T-cell (primary cell): ENCODE measurements at regions of chr11 and their contacts with region 1.

Region 1: DNA sequence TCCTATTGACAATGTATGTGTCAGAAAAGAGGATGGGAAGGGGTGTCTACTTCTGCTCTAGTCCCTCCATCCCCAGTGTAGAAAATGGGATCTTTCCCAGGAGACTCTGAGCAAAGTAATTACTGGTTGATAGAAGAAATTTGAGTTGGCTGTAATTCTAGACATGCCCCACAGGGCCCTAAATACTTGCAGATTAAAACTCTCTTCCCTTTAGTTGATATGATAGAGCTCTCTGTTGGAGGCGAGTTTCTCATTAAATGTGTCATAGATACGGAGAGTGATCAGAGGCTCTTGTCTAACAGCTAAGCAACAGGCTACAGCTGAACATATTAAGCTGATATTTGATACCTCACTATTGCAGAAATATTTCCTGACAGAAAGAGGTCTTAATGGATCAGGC is 32.9 kb downstream of the OR52E1 start:
- DNase-seq: no peak
- ATAC-seq: no peak
- H3K4me3 ChIP-seq: no peak overlapping the region
- H3K4me3 Mint-ChIP-seq: no peak overlapping the region
- H3K27ac ChIP-seq: no peak overlapping the region
- H3K27ac Mint-ChIP-seq: no peak overlapping the region
- H3K4me1 ChIP-seq: no peaks in the 10 kb centered on the region
- H3K4me1 Mint-ChIP-seq: no peaks in the 10 kb centered on the region
- H3K27me3 ChIP-seq: no peaks in the 10 kb centered on the region
- H3K27me3 Mint-ChIP-seq: peaks cover 0 to 12% of the 10 kb centered on the region in 2 donors

Region 2: DNA sequence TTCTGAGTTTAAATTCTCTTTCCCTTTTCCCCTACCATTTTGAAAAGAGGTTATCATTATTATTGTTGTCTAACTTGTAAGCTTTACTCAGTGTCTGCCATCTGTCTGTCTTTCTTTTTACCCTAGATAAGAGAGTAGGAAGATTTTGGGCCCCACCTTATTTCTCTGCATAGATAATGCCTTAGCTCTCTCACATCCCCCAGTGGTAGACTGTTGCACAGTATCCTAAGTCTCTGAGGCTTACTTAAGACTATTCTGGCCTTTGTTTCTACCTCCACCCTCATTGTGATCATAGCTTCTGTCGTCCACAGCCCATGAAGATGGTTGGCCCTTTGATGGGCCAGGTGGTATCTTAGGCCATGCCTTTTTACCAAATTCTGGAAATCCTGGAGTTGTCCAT is 111.2 kb before region 1 on chr11:
- CTCF ChIA-PET with region 1: no interaction called
- POLR2A ChIA-PET with region 1: no interaction called
- DNase-seq: no peak
- ATAC-seq: no peak
- H3K4me3 ChIP-seq: no peak overlapping the region
- H3K4me3 Mint-ChIP-seq: no peak overlapping the region
- H3K27ac ChIP-seq: no peak overlapping the region
- H3K27ac Mint-ChIP-seq: no peak overlapping the region
- H3K4me1 ChIP-seq: no peaks in the 10 kb centered on the region
- H3K4me1 Mint-ChIP-seq: no peaks in the 10 kb centered on the region
- H3K27me3 ChIP-seq: no peaks in the 10 kb centered on the region
- H3K27me3 Mint-ChIP-seq: peaks cover 0 to 4% of the 10 kb centered on the region in 2 donors

Region 3: GRCh38 chr11:5081405-5081804 is 20.8 kb before region 1 on chr11:
- CTCF ChIA-PET with region 1: no interaction called
- POLR2A ChIA-PET with region 1: no interaction called
- DNase-seq: no peak
- ATAC-seq: no peak
- H3K4me3 ChIP-seq: no peak overlapping the region
- H3K4me3 Mint-ChIP-seq: no peak overlapping the region
- H3K27ac ChIP-seq: no peak overlapping the region
- H3K27ac Mint-ChIP-seq: no peak overlapping the region
- H3K4me1 ChIP-seq: no peaks in the 10 kb centered on the region
- H3K4me1 Mint-ChIP-seq: no peaks in the 10 kb centered on the region
- H3K27me3 ChIP-seq: no peaks in the 10 kb centered on the region
- H3K27me3 Mint-ChIP-seq: peaks cover 0 to 4% of the 10 kb centered on the region in 2 donors

Region 4: DNA sequence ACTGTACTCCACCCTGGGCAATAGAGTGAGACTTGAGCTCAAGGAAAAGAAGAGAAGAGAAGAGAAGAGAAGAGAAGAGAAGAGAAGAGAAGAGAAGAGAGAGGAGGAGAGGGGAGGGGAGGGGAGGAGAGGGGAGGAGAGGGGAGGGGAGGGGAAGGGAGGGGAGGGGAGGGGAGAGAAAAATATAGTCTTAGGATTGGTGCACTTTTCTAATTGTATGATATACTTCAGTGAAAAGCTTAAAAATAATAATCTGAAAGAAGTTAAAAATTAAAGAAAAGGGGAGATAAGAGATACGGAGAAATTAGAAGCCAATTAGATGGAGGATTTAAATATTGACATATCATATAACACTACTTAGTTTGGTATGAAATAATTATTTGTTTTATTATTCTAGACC is 16.6 kb after region 1 on chr11:
- CTCF ChIA-PET with region 1: interaction called in 1 of 2 experiments, 17 read pairs
- POLR2A ChIA-PET with region 1: no interaction called
- DNase-seq: no peak
- ATAC-seq: no peak
- H3K4me3 ChIP-seq: no peak overlapping the region
- H3K4me3 Mint-ChIP-seq: no peak overlapping the region
- H3K27ac ChIP-seq: no peak overlapping the region
- H3K27ac Mint-ChIP-seq: no peak overlapping the region
- H3K4me1 ChIP-seq: no peaks in the 10 kb centered on the region
- H3K4me1 Mint-ChIP-seq: no peaks in the 10 kb centered on the region
- H3K27me3 ChIP-seq: peaks cover 0 to 2% of the 10 kb centered on the region in 2 experiments
- H3K27me3 Mint-ChIP-seq: peaks cover 2 to 31% of the 10 kb centered on the region in 2 donors

Region 5: DNA sequence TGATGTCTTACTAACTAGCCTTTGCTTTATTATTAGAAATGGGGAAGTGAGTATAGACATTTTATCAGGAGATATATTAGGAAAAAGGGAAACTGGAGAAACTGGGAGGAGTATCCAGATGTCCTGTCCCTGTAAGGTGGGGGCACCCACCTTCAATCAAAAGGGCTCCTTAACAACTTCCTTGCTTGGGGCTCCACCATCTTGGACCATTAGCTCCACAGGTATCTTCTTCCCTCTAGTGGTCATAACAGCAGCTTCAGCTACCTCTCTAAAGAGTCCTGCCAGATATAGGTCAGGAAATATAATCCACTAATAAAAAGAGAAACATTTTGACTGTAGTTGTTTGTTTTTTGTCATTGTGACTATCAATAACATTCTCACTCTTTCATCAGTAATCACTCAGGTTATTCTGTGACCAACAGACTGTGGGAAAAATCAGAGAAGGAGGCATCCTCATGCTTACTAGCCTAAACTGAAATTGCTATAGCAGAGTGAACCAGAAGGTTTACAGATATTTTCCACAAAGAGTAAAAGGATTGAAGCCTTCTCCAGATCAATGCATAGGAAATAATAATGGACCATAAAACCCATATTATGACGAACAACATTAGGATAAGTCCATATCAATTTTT is 189.1 kb after region 1 on chr11:
- CTCF ChIA-PET with region 1: no interaction called
- POLR2A ChIA-PET with region 1: no interaction called
- DNase-seq: no peak
- ATAC-seq: no peak
- H3K4me3 ChIP-seq: no peak overlapping the region
- H3K4me3 Mint-ChIP-seq: no peak overlapping the region
- H3K27ac ChIP-seq: no peak overlapping the region
- H3K27ac Mint-ChIP-seq: no peak overlapping the region
- H3K4me1 ChIP-seq: no peaks in the 10 kb centered on the region
- H3K4me1 Mint-ChIP-seq: no peaks in the 10 kb centered on the region
- H3K27me3 ChIP-seq: no peaks in the 10 kb centered on the region
- H3K27me3 Mint-ChIP-seq: no peaks in the 10 kb centered on the region